ENCODE measurements at regions of chr17 and their contacts with region 1.

Region 1: GRCh38 chr17:30824356-30825145 is at the start of gene CRLF3:
- DNase-seq: peak; percentile 88 to 94 (median 92)
- ATAC-seq: peak; percentile 97
- H3K4me3 ChIP-seq: peak within 1 kb of the TSS; percentile 62
- H3K4me3 Mint-ChIP-seq: peak within 1 kb of the TSS; percentile 92 to 100 (median 98)
- H3K27ac ChIP-seq: peak within 1 kb of the TSS; percentile 91
- H3K27ac Mint-ChIP-seq: peak within 1 kb of the TSS; percentile 84 to 99 (median 91)
- H3K4me1 ChIP-seq: peaks cover 23 to 25% of the 10 kb centered on the region in 2 donors
- H3K4me1 Mint-ChIP-seq: peaks cover 25 to 42% (median 36%) of the 10 kb centered on the region in 7 donors
- H3K27me3 ChIP-seq: no peaks in the 10 kb centered on the region
- H3K27me3 Mint-ChIP-seq: no peaks in the 10 kb centered on the region
- total RNA-seq, gene CRLF3: 65.5 to 142 (median 86.7) TPM

Region 2: GRCh38 chr17:30378824-30379302 is 445.7 kb before region 1 on chr17 and contains the start of gene CPD:
- CTCF ChIA-PET with region 1: no interaction called
- POLR2A ChIA-PET with region 1: no interaction called
- intact Hi-C with region 1: loop called (anchors 1 to 10 kb)
- DNase-seq: peak; percentile 93 to 99 (median 97)
- ATAC-seq: peak; percentile 98
- H3K4me3 ChIP-seq: peak within 1 kb of the TSS; percentile 76
- H3K4me3 Mint-ChIP-seq: peak within 1 kb of the TSS; percentile 90 to 99 (median 94)
- H3K27ac ChIP-seq: peak within 1 kb of the TSS; percentile 81
- H3K27ac Mint-ChIP-seq: peak within 1 kb of the TSS; percentile 89 to 98 (median 94)
- H3K4me1 ChIP-seq: peaks cover 20 to 50% of the 10 kb centered on the region in 2 donors
- H3K4me1 Mint-ChIP-seq: peaks cover 36 to 65% (median 55%) of the 10 kb centered on the region in 7 donors
- H3K27me3 ChIP-seq: no peaks in the 10 kb centered on the region
- H3K27me3 Mint-ChIP-seq: no peaks in the 10 kb centered on the region
- total RNA-seq, gene CPD: 16.5 to 52.9 (median 22.6) TPM

Region 3: DNA sequence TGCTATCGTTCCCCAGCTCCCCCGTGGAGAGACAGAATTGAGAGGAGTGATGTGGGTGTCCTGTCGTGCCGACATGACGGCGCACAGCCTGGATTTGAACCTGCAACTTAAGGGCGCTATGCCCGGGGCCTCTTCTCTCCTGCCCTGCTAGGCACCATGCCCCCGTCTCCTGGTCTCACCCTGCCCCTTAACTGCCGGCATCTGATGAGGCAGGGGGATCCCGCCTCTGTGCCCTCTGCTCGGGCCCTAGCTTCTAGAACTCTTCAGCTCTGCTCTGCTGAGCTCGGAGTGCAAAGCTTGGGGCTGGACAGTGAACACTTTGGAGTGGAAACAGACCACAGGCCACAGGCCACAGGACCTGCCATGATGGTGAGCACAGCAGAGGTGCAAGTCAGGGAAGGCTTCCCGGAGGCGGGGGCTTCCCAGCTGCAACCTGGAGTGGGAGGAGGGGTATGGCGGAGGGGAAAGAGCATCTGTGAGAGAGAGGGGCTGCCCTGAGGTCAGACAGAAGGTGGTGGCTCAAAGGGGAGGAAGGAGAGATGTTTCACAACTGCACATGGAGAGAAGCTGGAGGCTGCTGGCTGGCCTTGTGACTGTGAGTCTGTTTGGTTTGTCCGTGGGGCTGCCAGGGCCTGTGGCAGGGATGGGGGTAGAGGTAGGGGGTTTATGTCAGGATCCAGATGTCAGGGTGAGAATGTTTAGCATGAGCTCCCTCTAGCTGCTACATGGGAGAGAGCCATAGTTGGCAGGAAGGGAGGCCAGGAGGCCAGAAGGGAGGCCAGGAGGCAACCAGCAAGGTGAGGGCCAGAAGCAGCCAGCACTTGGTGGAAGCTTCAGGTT is 107.9 kb before region 1 on chr17:
- CTCF ChIA-PET with region 1: no interaction called
- POLR2A ChIA-PET with region 1: interaction called, 3 read pairs
- intact Hi-C with region 1: loop called in 1 of 2 experiments (anchors 5 kb)
- DNase-seq: no peak
- ATAC-seq: no peak
- H3K4me3 ChIP-seq: no peak overlapping the region
- H3K4me3 Mint-ChIP-seq: no peak overlapping the region
- H3K27ac ChIP-seq: no peak overlapping the region
- H3K27ac Mint-ChIP-seq: no peak overlapping the region
- H3K4me1 ChIP-seq: peaks cover 0 to 3% of the 10 kb centered on the region in 2 donors
- H3K4me1 Mint-ChIP-seq: peaks cover 5 to 12% (median 9%) of the 10 kb centered on the region in 7 donors
- H3K27me3 ChIP-seq: no peaks in the 10 kb centered on the region
- H3K27me3 Mint-ChIP-seq: peaks cover 0 to 2% (median 0%) of the 10 kb centered on the region in 5 donors

Region 4: GRCh38 chr17:30808785-30809286 is 15.7 kb before region 1 on chr17:
- CTCF ChIA-PET with region 1: interaction called, 61 read pairs
- POLR2A ChIA-PET with region 1: interaction called, 305 read pairs
- intact Hi-C with region 1: loop called (anchors 1 kb)
- DNase-seq: peak in 7 of 9 donors; percentile 69 to 89 (median 83)
- ATAC-seq: peak; percentile 95
- H3K4me3 ChIP-seq: peak overlapping the region; percentile 38
- H3K4me3 Mint-ChIP-seq: peak overlapping the region; percentile 84 to 94 (median 88)
- H3K27ac ChIP-seq: peak overlapping the region; percentile 81
- H3K27ac Mint-ChIP-seq: peak overlapping the region; percentile 96 to 99 (median 97)
- H3K4me1 ChIP-seq: peaks cover 41 to 63% of the 10 kb centered on the region in 2 donors
- H3K4me1 Mint-ChIP-seq: peaks cover 52 to 84% (median 72%) of the 10 kb centered on the region in 7 donors
- H3K27me3 ChIP-seq: no peaks in the 10 kb centered on the region
- H3K27me3 Mint-ChIP-seq: no peaks in the 10 kb centered on the region

Region 5: DNA sequence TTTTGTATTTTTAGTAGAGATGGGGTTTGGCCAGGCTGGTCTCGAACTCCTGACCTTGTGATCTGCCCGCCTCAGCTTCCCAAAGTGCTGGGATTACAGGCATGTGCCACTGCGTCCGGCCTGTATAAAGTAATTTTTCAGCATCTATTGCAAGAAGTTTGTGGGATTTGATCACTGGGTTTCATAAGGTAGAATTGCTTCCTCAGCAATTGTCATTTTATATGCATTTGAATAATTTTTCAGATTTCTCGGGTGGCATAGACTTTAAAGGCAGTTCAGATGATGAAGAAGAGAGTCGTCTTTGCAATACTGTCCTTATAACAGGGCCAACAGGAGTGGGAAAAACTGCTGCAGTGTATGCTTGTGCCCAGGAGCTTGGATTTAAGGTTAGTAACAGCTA is 44.5 kb after region 1 on chr17:
- CTCF ChIA-PET with region 1: no interaction called
- POLR2A ChIA-PET with region 1: no interaction called
- intact Hi-C with region 1: no loop called
- DNase-seq: no peak
- ATAC-seq: no peak
- H3K4me3 ChIP-seq: no peak overlapping the region
- H3K4me3 Mint-ChIP-seq: no peak overlapping the region
- H3K27ac ChIP-seq: no peak overlapping the region
- H3K27ac Mint-ChIP-seq: peak overlapping the region in 1 of 9 donors; percentile 22
- H3K4me1 ChIP-seq: no peaks in the 10 kb centered on the region
- H3K4me1 Mint-ChIP-seq: peaks cover 0 to 2% (median 0%) of the 10 kb centered on the region in 7 donors
- H3K27me3 ChIP-seq: no peaks in the 10 kb centered on the region
- H3K27me3 Mint-ChIP-seq: no peaks in the 10 kb centered on the region

Region 6: GRCh38 chr17:30939051-30939689 is 114.6 kb after region 1 on chr17:
- CTCF ChIA-PET with region 1: no interaction called
- POLR2A ChIA-PET with region 1: no interaction called
- intact Hi-C with region 1: no loop called
- DNase-seq: no peak
- ATAC-seq: no peak
- H3K4me3 ChIP-seq: no peak overlapping the region
- H3K4me3 Mint-ChIP-seq: no peak overlapping the region
- H3K27ac ChIP-seq: no peak overlapping the region
- H3K27ac Mint-ChIP-seq: peak overlapping the region in 1 of 9 donors; percentile 33
- H3K4me1 ChIP-seq: no peaks in the 10 kb centered on the region
- H3K4me1 Mint-ChIP-seq: peaks cover 0 to 11% (median 3%) of the 10 kb centered on the region in 7 donors
- H3K27me3 ChIP-seq: no peaks in the 10 kb centered on the region
- H3K27me3 Mint-ChIP-seq: peaks cover 0 to 3% (median 0%) of the 10 kb centered on the region in 5 donors

Region 7: DNA sequence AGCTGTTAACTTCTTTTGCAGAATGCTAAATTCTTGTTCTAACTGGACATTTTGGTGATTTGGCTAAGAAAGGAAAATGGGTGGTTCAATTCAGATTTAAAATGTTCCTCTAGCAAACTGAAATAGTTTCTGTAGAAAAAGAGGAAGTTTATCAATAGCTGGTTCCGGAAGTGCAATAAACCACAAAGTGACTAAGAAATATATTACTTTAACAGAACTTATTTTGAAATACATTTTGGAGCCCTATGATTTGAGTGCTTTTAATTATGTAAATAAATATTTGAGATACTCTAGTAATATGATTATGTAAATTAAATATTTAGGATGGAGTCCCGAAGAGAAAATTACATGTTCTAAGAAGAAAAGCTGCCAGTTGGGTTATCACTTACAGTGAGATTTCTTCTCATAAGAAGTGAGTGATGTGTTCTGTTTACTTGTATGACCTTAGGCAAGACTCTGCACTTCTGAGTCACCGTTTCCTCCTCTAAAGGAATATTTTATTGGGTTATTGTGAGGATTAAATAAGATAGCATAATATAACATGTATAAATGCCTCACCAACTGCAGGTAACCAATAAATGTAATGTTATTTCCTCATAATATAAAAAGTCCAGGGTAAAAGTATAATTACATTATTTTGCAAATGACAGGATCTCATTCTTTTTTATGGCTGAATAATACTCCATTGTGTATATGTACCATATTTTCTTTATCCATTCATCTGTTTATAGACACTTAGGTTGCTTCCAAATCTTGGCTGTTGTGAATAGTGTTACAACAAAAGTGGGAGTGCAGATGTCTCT is 489.6 kb after region 1 on chr17 and contains the start of gene EVI2B:
- CTCF ChIA-PET with region 1: no interaction called
- POLR2A ChIA-PET with region 1: no interaction called
- intact Hi-C with region 1: loop called (anchors 5 kb)
- DNase-seq: peak in 7 of 9 donors; percentile 51 to 73 (median 69)
- ATAC-seq: peak; percentile 46
- H3K4me3 ChIP-seq: peak within 1 kb of the TSS; percentile 63
- H3K4me3 Mint-ChIP-seq: peak within 1 kb of the TSS; percentile 85 to 98 (median 92)
- H3K27ac ChIP-seq: peak within 1 kb of the TSS; percentile 82
- H3K27ac Mint-ChIP-seq: peak within 1 kb of the TSS; percentile 84 to 98 (median 95)
- H3K4me1 ChIP-seq: peaks cover 27 to 41% of the 10 kb centered on the region in 2 donors
- H3K4me1 Mint-ChIP-seq: peaks cover 31 to 52% (median 44%) of the 10 kb centered on the region in 7 donors
- H3K27me3 ChIP-seq: no peaks in the 10 kb centered on the region
- H3K27me3 Mint-ChIP-seq: peaks cover 0 to 2% (median 0%) of the 10 kb centered on the region in 5 donors
- total RNA-seq, gene EVI2B: 57.8 to 154 (median 134) TPM

Measured in naive thymus-derived CD4-positive, alpha-beta T cell (primary cell).